Cardiac septum (tissue), 1 donor: ENCODE measurements at regions of chr18 and their contacts with region 1.

Region 1: GRCh38 chr18:48842259-48843061 is 108.3 kb downstream of the SMAD7 start:
- DNase-seq: no peak

Region 2: DNA sequence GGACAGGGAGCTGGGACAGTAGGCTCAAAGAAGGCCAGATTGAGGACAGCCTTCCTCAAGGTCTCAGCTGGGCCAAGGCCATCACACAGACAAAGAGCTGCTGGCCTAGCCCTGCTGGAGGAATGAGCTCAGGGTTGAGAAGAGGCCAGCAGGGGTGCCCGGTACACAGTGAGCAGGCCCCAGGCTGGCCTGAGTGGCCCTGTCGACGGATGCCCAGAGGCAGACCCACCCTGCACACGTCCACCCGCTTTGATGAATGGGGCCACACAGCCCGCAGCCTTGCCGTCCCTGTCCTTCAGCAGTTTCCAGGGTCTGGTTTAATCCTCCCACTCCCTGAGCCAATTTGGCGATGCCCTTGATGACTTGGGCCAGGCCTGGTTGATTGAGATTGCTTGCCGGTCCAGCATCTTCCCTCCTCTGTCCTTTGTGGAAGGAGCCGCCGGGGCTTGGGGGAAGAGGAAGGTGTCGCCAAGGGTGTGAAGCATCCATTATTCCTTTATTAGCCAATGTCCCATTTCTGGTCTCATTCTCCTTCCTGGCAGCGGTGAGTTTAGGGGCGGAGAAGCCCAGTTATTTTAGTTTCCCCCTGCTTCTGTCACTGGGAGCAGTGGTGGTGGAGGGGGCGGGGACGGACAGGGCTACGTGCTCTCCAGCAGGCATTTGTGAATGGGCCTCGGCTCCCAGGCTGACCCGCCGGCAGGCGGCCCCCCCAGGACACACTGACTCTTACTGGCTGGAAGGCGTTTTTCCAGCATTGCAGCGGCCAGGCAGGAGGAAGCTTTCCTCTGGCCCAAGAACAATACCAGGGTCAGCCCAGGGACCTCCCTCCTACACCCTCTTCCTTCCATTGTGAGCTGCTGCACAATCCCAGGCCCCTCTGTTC is 161.9 kb before region 1 on chr18:
- intact Hi-C with region 1: loop called (anchors 5 kb)
- DNase-seq: peak; percentile 93

Region 3: GRCh38 chr18:48711651-48712486 is 130.6 kb before region 1 on chr18:
- intact Hi-C with region 1: loop called (anchors 5 kb)
- DNase-seq: no peak

Region 4: GRCh38 chr18:48790226-48790874 is 52.1 kb before region 1 on chr18:
- intact Hi-C with region 1: loop called (anchors 5 kb)
- DNase-seq: peak; percentile 91